ENCODE measurements at regions of chr2 and their contacts with region 1.

Region 1: GRCh38 chr2:20097879-20098714 is 46.7 kb upstream of the LAPTM4A start:
- DNase-seq: peak; percentile 64 to 74
- ATAC-seq: peak; percentile 84 to 86
- H3K4me3 ChIP-seq: no peak overlapping the region
- H3K27ac ChIP-seq: no peak overlapping the region
- H3K4me1 ChIP-seq: peaks cover 10 to 12% of the 10 kb centered on the region in 2 donors
- H3K27me3 ChIP-seq: no peaks in the 10 kb centered on the region
- CTCF ChIP-seq: peak; percentile 80 to 93 (median 85)
- POLR2A ChIP-seq: no peak

Region 2: GRCh38 chr2:19851116-19851695 is 246.9 kb before region 1 on chr2:
- in situ Hi-C with region 1: no loop called
- intact Hi-C with region 1: no loop called
- DNase-seq: no peak
- ATAC-seq: no peak
- H3K4me3 ChIP-seq: no peak overlapping the region
- H3K27ac ChIP-seq: no peak overlapping the region
- H3K4me1 ChIP-seq: peaks cover 8 to 13% of the 10 kb centered on the region in 2 donors
- H3K27me3 ChIP-seq: no peaks in the 10 kb centered on the region
- CTCF ChIP-seq: no peak
- POLR2A ChIP-seq: no peak

Region 3: DNA sequence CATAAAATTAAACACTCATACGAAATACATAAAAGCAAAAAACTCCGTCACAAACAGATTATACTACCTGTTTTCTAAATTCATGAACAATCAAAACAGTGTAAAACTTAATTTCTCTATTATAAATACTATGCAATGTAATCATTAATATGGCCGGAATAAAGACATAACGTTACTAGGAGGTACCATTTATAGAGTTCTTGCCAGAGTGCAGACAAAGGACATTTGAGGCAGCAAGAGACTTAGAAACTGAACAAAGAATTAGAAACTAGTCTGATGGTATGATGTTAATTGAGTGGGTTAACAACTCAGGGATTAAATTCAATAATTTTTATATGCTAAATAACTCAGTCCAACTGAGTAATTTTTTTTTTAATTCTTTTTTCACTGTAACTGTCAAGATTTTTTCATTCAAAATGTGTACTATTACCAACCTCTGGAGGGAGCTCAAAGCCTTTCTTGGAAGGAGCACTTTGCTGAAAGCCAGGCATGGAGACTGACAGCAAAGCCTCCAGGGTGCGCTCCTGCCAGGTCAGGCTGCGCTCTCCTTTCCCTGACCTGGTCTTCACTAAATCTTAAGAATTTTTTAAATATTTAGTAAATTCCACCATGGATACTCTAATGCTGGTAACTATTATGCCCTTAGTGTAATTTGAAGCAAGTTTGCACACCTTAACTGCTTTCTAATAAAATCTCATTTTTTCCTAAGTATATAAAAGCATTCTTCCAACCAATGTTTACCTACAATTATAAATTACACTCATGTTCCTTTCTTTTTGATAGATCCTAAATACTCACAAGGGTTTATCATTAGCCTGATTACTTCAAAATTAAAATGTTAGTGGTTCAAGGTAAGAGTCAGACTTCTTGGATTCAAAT is 142.3 kb before region 1 on chr2:
- in situ Hi-C with region 1: no loop called
- intact Hi-C with region 1: loop called (anchors 1 kb)
- DNase-seq: peak; percentile 12 to 20
- ATAC-seq: peak; percentile 69 to 84
- H3K4me3 ChIP-seq: no peak overlapping the region
- H3K27ac ChIP-seq: no peak overlapping the region
- H3K4me1 ChIP-seq: no peaks in the 10 kb centered on the region
- H3K27me3 ChIP-seq: no peaks in the 10 kb centered on the region
- CTCF ChIP-seq: peak; percentile 16 to 69 (median 38)
- POLR2A ChIP-seq: no peak

Region 4: GRCh38 chr2:20015472-20016083 is 82.5 kb before region 1 on chr2:
- in situ Hi-C with region 1: loop called (anchors 5 kb)
- intact Hi-C with region 1: loop called (anchors 1 kb)
- DNase-seq: no peak
- ATAC-seq: peak; percentile 25 to 45
- H3K4me3 ChIP-seq: no peak overlapping the region
- H3K27ac ChIP-seq: no peak overlapping the region
- H3K4me1 ChIP-seq: peaks cover 0 to 10% of the 10 kb centered on the region in 2 donors
- H3K27me3 ChIP-seq: peaks cover 5 to 15% (median 15%) of the 10 kb centered on the region in 3 donors
- CTCF ChIP-seq: peak; percentile 35 to 66 (median 57)
- POLR2A ChIP-seq: no peak

Region 5: GRCh38 chr2:20021405-20022009 is 76.6 kb before region 1 on chr2:
- in situ Hi-C with region 1: loop called (anchors 5 kb)
- intact Hi-C with region 1: no loop called
- DNase-seq: no peak
- ATAC-seq: no peak
- H3K4me3 ChIP-seq: no peak overlapping the region
- H3K27ac ChIP-seq: no peak overlapping the region
- H3K4me1 ChIP-seq: no peaks in the 10 kb centered on the region
- H3K27me3 ChIP-seq: no peaks in the 10 kb centered on the region
- CTCF ChIP-seq: no peak
- POLR2A ChIP-seq: no peak